Dorsolateral prefrontal cortex (tissue), 120 donors: ENCODE measurements at regions of chr12 and their contacts with region 1.

Region 1: DNA sequence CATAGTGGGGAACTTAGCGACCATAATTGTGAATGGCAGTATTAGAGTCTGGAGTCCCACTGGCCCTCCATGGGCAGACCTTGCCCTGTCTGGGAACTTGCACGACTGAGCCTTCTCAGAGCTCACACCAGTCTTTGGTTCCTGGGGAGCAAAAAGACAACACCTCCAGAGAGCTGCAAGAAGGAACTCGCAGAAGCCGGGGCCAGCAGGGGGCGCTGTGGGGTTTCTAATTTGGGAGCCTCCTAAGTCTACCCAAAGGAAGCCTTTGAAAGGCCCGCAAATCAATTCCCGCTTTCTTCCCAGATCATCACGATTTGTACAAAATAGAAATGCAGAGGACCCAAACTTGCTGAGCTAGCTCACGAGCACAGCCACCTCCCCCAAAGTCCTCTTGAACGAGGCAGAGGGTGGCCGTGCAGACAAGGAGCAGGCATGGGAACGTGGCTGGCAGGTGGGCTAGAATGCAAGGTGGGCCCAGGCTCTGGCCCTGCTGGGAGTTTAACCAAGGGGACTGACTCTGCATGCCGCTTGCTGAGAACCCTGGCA is 46.3 kb upstream of the FBXO21 start:
- DNase-seq: peak; percentile 85 to 96 (median 92)
- H3K4me3 ChIP-seq: no peak overlapping the region
- H3K27ac ChIP-seq: no peak overlapping the region
- H3K27me3 ChIP-seq: peaks cover 0 to 3% (median 0%) of the 10 kb centered on the region in 45 donors
- CTCF ChIP-seq: peak; percentile 70 to 94 (median 87)

Region 2: DNA sequence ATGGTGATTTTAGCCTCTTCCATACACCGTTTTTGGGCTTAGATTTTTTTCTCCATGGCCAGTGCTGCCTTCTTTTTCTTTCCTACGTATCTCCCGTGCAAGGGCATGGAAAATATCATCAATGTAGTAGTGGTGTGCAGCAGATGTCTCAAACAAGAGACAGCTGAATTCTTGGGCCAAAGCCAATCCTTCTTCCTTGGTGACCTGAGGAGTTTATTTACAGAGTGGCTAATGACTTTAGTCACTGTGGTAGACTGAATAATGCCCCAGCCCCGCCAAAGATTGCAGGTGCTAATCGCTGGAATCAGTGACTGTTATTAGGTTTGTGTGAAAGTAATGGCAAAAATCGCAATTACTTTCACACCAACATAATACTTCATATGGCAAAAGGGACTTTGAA is 360.4 kb after region 1 on chr12:
- intact Hi-C with region 1: loop called in 1 of 2 experiments (anchors 10 kb)
- DNase-seq: peak in 1 of 10 donors; percentile 37
- H3K4me3 ChIP-seq: no peak overlapping the region
- H3K27ac ChIP-seq: no peak overlapping the region
- H3K27me3 ChIP-seq: peaks cover 0 to 1% (median 0%) of the 10 kb centered on the region in 45 donors
- CTCF ChIP-seq: no peak

Region 3: DNA sequence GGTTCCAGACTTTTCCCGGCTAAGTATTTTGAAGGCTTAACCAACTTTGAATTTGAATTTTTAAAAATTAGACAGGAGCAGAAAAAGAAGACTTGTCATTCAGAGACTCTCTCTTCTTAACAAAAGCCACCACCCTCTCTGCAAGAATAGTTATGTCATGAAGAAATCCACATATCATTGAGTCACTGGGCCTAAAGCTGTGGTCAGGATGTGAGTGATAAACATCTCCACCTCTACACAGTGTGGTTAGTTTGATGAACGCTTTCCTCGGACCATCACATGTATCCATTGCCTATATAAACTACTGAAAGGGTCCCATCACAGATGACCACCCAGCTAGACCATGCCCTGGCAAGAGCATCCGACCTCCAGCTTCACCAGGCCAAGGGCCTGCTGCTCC is 506.2 kb after region 1 on chr12:
- intact Hi-C with region 1: no loop called
- DNase-seq: no peak
- H3K4me3 ChIP-seq: no peak overlapping the region
- H3K27ac ChIP-seq: no peak overlapping the region
- H3K27me3 ChIP-seq: no peaks in the 10 kb centered on the region
- CTCF ChIP-seq: no peak